ENCODE measurements at regions of chr15 and their contacts with region 1.

Region 1: GRCh38 chr15:39959411-39959810 is 25.5 kb downstream of the EIF2AK4 start:
- DNase-seq: no peak
- ATAC-seq: no peak

Region 2: DNA sequence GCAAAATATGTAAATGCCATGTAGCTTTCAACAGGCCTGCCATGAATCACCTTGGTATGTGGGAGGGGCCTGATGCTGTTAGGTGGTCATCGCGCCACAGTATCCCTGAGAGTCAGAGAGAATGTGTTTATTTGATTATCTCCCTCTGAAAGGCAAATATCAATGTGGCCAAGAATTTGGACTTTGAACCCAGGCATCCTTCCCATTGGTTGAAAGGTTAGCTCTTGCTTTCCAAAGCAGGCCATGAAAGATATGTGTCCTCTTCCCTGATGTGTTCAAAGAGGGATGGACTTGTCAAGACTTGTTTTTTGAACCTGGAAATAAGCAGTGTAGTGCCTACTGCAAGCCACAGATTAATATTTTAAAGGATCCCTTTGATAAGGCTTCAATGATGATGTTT is 42.9 kb after region 1 on chr15:
- intact Hi-C with region 1: loop called (anchors 10 kb)
- DNase-seq: no peak
- ATAC-seq: no peak